ENCODE measurements at regions of chr11 and their contacts with region 1.

Region 1: DNA sequence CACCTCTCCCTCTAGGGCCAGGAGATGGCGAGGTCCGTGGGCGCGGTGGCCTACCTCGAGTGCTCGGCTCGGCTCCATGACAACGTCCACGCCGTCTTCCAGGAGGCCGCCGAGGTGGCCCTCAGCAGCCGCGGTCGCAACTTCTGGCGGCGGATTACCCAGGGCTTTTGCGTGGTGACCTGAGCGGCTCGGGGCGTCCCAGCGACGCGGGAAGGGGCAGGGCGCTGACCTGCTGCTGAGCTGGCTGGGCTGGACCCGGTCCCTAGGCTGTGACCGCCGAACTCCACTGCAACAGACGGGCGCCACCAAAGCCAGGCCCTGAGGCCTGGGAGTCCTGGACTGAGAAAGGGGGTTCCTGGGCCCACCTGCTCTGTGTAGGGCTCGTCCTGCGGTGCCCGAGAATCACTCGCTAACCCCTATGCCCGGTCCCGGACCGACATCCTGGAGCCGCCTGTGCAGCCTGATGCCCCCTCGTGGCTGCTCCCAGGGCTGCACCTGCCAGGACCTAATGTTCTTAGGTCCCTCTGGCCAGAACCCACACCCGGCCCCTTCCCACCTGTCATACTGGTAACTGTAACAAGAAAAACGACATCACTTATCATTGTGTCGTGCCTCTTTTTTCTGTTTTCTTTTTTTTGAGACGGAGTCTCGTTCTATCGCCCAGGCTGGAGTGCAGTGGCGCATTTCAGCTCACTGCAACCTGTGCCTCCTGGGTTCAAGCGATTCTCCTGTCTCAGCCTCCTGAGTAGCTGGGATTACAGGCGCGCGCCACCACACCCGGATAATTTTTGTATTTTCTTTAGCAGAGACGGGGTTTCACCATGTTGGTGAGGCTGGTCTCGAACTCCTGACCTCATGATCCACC is 15.0 kb downstream of the RHOD start:
- DNase-seq: peak; percentile 93
- ATAC-seq: peak; percentile 98
- H3K4me3 Mint-ChIP-seq: peak overlapping the region; percentile 53
- H3K27ac Mint-ChIP-seq: no peak overlapping the region
- H3K4me1 Mint-ChIP-seq: peaks cover 8% of the 10 kb centered on the region; the same call in 1 of the 2 replicates
- H3K27me3 Mint-ChIP-seq: no peaks in the 10 kb centered on the region; the same call in 1 of the 2 replicates
- CTCF ChIP-seq: peak; percentile 90

Region 2: DNA sequence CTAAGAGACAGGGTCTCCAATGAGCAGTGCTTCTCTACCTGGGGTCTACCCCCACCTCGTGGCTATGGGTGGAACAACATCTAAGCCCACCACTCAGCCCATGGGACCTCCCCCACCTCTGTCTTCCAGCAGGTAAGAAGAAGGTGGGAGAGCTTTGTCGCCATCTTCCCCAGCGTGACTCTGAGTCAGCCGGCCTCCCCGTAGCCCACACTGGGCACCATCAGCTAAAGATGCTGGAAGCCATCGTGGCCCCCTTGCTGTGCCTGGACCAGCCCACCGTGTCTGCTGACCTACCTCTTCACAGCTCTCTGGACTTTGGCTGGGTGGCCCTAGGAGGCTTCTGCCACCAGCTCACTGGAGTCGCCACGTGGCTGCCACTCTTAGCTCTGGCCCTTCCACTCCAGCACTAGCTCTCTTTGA is 95.6 kb before region 1 on chr11:
- CTCF ChIA-PET with region 1: no interaction called
- POLR2A ChIA-PET with region 1: no interaction called
- DNase-seq: peak; percentile 89
- ATAC-seq: peak; percentile 92
- H3K4me3 Mint-ChIP-seq: no peak overlapping the region
- H3K27ac Mint-ChIP-seq: no peak overlapping the region
- H3K4me1 Mint-ChIP-seq: peaks cover 11% of the 10 kb centered on the region
- H3K27me3 Mint-ChIP-seq: no peaks in the 10 kb centered on the region
- CTCF ChIP-seq: peak; percentile 86

Region 3: DNA sequence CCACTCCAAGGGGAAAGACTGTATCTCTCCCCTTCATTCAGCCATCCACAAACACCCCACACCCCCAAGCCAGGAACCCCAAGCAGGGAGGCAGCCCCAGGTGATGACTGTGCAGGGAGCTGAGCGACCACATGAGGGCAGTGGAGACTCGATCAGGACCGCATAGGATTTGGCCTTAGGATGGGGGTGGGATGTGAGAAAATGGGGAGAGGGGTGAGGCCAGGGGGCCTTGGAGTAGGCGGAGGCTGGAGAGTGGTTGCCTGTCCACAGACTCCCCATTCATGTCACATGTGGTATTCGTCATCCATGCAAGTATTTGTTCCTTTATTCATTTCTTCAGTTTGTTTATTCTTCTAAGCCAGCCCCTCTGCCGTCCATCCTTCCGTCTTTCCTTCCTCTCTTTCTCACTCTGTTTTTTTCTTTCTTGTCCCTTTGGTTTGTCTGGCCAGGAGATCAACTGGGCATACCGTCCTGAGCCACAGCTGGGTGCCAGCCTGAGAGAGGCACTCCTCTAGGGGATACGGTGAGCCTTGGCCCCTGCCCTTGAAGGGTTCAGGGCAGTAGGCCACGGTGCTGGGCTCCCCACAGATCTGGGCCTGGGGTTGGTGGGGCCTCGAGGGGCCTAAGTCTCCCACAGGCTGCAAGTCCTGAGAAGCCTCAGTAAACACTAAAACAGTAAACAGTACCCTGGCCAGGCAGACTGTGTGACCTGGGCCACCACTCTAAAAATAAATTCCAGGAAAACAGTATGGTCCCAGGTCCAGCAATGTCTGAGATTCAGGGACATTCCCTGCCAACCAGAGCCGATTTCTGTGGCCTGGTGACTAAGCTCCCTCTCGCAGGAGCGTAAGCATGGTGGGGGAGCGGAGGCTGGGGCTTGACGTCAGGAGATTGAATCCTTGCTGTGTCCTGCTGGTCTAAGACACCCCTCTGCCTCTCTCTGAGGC is 17.5 kb before region 1 on chr11:
- CTCF ChIA-PET with region 1: interaction called, 82 read pairs
- POLR2A ChIA-PET with region 1: interaction called, 5 read pairs
- DNase-seq: peak; percentile 83
- ATAC-seq: peak; percentile 72
- H3K4me3 Mint-ChIP-seq: no peak overlapping the region
- H3K27ac Mint-ChIP-seq: no peak overlapping the region
- H3K4me1 Mint-ChIP-seq: peaks cover 23% of the 10 kb centered on the region
- H3K27me3 Mint-ChIP-seq: no peaks in the 10 kb centered on the region; the same call in 1 of the 2 replicates
- CTCF ChIP-seq: peak; percentile 49